A549 (cell line): ENCODE measurements at regions of chr1 and their contacts with region 1.

Region 1: DNA sequence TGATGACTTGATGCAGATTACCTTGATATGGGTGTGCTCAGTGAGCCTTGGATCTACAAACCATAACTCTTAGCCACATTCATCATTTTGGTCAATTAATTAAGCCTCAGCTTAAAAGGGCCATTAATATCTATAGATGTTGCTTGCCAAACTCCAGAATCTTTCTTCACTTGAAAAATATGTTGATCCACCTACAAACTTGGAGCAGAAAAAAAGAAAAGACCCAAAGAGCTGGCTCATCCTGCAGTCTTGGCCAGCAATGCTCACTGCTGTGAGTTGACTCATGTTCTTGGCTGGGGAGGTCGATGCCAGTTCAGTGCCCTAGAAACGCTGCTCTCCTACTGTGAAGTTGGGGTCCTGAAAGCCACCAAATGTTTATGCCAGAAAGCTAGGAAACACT is 75.4 kb downstream of the DPT start:
- DNase-seq: no peak
- ATAC-seq: peak in 1 of 2 experiments; percentile 45; a peak in 1 of 6 replicates
- H3K4me3 ChIP-seq: no peak overlapping the region
- H3K27ac ChIP-seq: no peak overlapping the region
- H3K4me1 ChIP-seq: peaks cover 5% of the 10 kb centered on the region; the same call in 1 of the 3 replicates
- CTCF ChIP-seq: no peak
- EP300 ChIP-seq: no peak
- POLR2A ChIP-seq: no peak
- RAD21 ChIP-seq: no peak

Region 2: GRCh38 chr1:168637350-168637991 is 16.1 kb before region 1 on chr1:
- CTCF ChIA-PET with region 1: interaction called, 12 read pairs
- POLR2A ChIA-PET with region 1: no interaction called
- DNase-seq: peak in 1 of 2 experiments; percentile 67
- ATAC-seq: peak; percentile 62 to 75; a peak in 4 of 6 replicates
- H3K4me3 ChIP-seq: no peak overlapping the region
- H3K27ac ChIP-seq: peak overlapping the region; percentile 53; a peak in 2 of 6 replicates
- H3K4me1 ChIP-seq: peaks cover 11% of the 10 kb centered on the region; the same call in 2 of the 3 replicates
- CTCF ChIP-seq: no peak; the same call in 2 of the 3 replicates
- EP300 ChIP-seq: no peak
- POLR2A ChIP-seq: no peak
- RAD21 ChIP-seq: peak in 1 of 2 experiments; percentile 55; a peak in 2 of 5 replicates

Region 3: DNA sequence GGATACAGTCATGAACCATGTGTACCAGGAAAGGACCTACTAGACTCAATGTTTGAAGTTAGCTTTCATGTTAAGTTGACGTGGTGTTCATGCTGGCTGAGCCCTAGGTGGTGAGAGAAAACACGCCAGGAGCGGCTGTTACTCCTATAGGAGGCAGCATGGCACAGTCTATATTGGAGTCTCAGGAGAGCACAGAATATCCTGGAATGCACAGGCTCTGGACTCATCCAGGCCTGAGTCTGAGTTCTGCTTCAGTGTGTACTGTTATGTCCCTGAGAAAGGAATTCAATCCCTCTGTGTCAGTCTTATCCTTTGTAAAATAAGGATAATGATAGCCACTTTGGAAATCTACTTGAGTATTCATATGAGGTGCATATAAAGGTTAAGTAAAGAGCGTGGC is 34.2 kb after region 1 on chr1:
- CTCF ChIA-PET with region 1: no interaction called
- POLR2A ChIA-PET with region 1: no interaction called
- DNase-seq: peak in 1 of 2 experiments; percentile 33
- ATAC-seq: peak; percentile 64 to 80; a peak in 5 of 6 replicates
- H3K4me3 ChIP-seq: no peak overlapping the region
- H3K27ac ChIP-seq: no peak overlapping the region
- H3K4me1 ChIP-seq: peaks cover 35% of the 10 kb centered on the region
- CTCF ChIP-seq: no peak
- EP300 ChIP-seq: no peak
- POLR2A ChIP-seq: no peak
- RAD21 ChIP-seq: peak; percentile 21 to 48; a peak in 3 of 5 replicates

Region 4: GRCh38 chr1:168752171-168752832 is 98.7 kb after region 1 on chr1:
- CTCF ChIA-PET with region 1: no interaction called
- POLR2A ChIA-PET with region 1: no interaction called
- DNase-seq: peak; percentile 49 to 66
- ATAC-seq: peak; percentile 83 to 87
- H3K4me3 ChIP-seq: peak overlapping the region; percentile 28; the same call in 1 of the 3 replicates
- H3K27ac ChIP-seq: peak overlapping the region; percentile 58 to 80
- H3K4me1 ChIP-seq: peaks cover 28% of the 10 kb centered on the region
- CTCF ChIP-seq: no peak
- EP300 ChIP-seq: peak; percentile 17 to 47; a peak in 3 of 5 replicates
- POLR2A ChIP-seq: no peak
- RAD21 ChIP-seq: no peak; a peak in 2 of 5 replicates